ENCODE measurements at regions of chr6 and their contacts with region 1.

Region 1: DNA sequence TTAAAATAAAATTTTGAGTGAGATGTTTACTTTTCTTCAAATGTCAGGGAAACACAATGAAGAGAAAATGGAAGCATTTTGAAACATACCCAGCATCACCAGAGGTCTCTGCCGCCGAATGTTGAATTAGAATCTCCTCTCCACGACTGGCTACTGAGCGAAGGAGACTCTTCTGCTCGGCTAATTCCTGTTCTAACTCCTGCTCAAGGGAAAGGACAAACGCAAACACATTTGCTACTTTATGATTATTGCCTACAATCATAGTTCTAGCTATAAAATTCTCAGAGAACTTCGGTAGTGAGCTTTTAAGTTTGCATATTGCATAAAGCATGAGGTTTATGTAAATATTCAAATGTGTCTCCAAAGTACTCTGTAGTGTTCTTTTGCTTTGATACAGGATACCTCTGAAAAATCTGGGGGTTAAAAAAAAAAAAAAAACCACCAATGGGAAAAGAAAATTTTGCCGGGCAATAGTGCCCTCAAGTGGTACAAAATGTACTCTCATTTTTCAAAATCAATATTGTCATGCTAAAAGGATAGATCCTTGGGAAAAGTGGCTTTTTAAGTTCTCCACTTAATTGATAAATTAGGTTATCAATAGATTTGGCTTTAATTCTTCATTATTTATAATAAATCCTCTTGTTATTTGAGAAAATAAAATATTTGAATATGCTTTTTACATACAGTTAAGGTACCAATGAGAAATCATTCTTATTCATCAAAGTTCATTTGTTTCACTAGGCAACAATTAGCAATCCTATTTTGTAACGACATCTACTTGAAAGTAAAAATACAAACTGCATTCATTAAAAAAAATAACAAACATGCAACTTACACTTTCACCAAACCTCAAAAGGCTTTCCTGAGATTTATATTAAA is 369.0 kb downstream of the SYNE1 start:
- DNase-seq: no peak
- ATAC-seq: no peak

Region 2: GRCh38 chr6:151675746-151676416 is 592.3 kb before region 1 on chr6:
- intact Hi-C with region 1: loop called (anchors 10 kb)
- DNase-seq: peak; percentile 43
- ATAC-seq: peak; percentile 53

Region 3: GRCh38 chr6:152085451-152085921 is 182.7 kb before region 1 on chr6:
- intact Hi-C with region 1: no loop called
- DNase-seq: no peak
- ATAC-seq: no peak

Region 4: DNA sequence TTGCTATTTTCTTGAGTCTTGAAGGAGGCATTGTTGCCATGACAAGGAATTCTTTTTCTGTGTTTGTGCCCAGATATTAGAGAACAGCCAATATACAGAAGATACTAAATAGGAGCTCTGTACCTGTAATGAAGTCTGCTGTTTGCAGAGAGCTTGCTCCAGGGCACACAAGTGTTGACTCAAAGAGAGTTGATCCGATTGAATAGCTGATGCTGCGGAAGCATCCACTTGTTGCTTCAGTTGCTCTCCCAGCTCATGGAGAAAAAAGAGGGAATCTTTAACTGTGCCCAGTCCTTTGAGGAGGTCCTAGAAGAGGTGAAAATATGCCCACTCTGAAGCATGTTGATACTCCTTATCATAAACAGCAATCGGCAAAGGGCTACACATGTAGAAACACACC is 49.3 kb before region 1 on chr6:
- intact Hi-C with region 1: loop called (anchors 10 kb)
- DNase-seq: no peak
- ATAC-seq: no peak